Ascending aorta (tissue), 2 donors: ENCODE measurements at regions of chr20 and their contacts with region 1.

Region 1: GRCh38 chr20:33992923-33993575 is 662 bp upstream of the RALY start:
- DNase-seq: peak; percentile 96 to 100
- H3K4me3 ChIP-seq: peak overlapping the region; percentile 92 to 93
- H3K27ac ChIP-seq: peak overlapping the region; percentile 98 to 99
- H3K4me1 ChIP-seq: peaks cover 11 to 28% of the 10 kb centered on the region in 2 donors
- H3K27me3 ChIP-seq: no peaks in the 10 kb centered on the region
- CTCF ChIP-seq: no peak

Region 2: DNA sequence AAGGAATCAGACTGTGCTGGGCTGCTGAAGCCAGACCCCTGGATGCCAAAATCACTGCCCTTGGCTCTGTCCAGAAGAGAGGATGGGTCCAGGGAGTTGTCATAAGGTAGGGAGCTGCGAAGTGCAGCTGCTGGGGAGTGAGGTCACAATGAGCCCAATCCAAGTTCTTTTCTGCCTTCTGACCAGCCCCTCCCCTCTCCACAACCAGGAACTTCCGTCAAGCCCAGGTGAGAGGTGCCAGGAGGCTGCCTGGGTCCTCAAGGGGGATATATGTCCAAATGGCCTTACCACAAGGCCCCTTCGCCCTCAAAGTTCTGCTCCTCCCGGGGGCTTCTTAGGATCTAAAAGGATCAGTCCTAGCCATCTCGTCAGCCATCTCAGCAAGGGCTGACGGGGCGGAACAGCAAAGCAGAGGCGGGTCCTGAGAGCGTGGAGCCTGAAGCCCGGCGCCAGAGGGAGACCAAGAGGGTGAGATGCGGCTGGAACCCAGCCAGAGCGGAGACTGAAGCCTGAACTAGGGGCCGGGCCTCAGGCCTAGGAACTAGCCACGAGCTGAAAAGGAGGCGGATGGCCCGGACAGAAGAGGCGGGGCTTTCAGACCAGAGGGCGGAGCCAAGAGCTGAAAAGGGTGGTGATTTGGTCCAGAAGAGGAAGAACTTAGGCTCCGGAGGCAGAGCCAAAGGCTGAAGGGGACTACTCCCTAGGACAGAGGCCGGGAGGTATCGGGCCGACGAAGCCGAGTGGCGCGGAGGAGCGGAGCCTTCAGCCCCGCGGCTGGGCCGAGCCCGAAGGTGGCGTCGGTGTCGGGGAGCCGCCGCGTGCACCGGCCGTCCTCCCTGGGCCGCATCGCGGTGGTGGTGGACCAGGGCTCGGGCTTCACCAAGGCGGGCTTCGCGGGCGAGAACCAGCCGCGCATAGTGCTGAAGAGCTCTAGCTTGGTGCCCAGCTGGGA is 326.5 kb before region 1 on chr20 and contains the start of gene ACTL10:
- intact Hi-C with region 1: loop called (anchors 5 kb)
- DNase-seq: peak; percentile 95 to 99
- H3K4me3 ChIP-seq: peak within 1 kb of the TSS; percentile 65 to 70
- H3K27ac ChIP-seq: peak within 1 kb of the TSS; percentile 88 to 93
- H3K4me1 ChIP-seq: peaks cover 9 to 40% of the 10 kb centered on the region in 2 donors
- H3K27me3 ChIP-seq: no peaks in the 10 kb centered on the region
- CTCF ChIP-seq: peak in 2 of 3 experiments; percentile 43 to 44
- total RNA-seq, gene ACTL10: 26.3 TPM

Region 3: GRCh38 chr20:33810885-33811777 is 181.9 kb before region 1 on chr20 and contains the start of gene CHMP4B:
- intact Hi-C with region 1: loop called (anchors 1 kb)
- DNase-seq: peak; percentile 98 to 100
- H3K4me3 ChIP-seq: peak within 1 kb of the TSS; percentile 94 to 99
- H3K27ac ChIP-seq: peak within 1 kb of the TSS; percentile 94 to 98
- H3K4me1 ChIP-seq: peaks cover 4 to 24% of the 10 kb centered on the region in 2 donors
- H3K27me3 ChIP-seq: no peaks in the 10 kb centered on the region
- CTCF ChIP-seq: no peak
- total RNA-seq, gene CHMP4B: 42.8 TPM

Region 4: GRCh38 chr20:33862709-33863403 is 130.2 kb before region 1 on chr20:
- intact Hi-C with region 1: loop called (anchors 2 kb)
- DNase-seq: peak in 1 of 2 donors; percentile 68
- H3K4me3 ChIP-seq: peak overlapping the region in 1 of 2 donors; percentile 20
- H3K27ac ChIP-seq: no peak overlapping the region
- H3K4me1 ChIP-seq: peaks cover 4 to 5% of the 10 kb centered on the region in 2 donors
- H3K27me3 ChIP-seq: no peaks in the 10 kb centered on the region
- CTCF ChIP-seq: peak; percentile 60 to 81 (median 62)

Region 5: GRCh38 chr20:34012735-34013134 is 19.7 kb after region 1 on chr20:
- intact Hi-C with region 1: loop called (anchors 2 kb)
- DNase-seq: no peak
- H3K4me3 ChIP-seq: no peak overlapping the region
- H3K27ac ChIP-seq: no peak overlapping the region
- H3K4me1 ChIP-seq: peaks cover 9 to 64% of the 10 kb centered on the region in 2 donors
- H3K27me3 ChIP-seq: no peaks in the 10 kb centered on the region
- CTCF ChIP-seq: no peak

Region 6: DNA sequence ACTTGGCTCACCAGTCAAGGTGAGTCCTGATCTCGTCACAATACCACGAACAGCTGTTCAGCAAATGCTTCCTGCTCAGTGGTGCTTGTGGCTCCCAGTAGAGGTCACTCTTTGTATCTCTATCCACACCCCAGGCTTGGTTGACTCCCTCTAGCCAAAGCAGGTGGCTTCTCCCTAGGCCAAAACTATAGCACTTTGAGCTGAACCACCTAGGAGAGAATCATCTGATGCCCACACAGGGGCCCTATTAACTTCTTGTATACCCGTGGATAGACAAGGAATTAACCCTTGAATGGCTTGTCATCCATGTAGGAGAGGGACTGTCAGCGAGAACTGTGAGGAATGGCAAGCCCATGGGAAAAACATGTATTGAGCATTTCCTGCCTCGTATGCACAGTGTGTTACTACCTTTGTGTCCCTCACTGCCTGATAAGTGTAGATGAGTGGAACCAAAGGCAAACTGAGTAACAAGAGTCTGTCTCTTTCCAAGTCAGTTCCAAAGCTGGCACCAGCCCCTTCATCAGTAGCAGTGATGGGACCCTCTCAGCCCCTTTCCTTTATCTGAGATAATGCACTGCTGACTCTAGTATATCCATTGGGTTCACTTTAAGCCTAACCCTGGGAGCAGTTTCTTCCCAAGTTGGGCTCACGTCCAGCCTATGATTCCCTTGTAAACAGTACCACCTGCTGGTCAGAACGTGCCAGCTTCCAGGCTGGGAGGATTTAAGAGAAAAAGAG is 76.5 kb after region 1 on chr20:
- intact Hi-C with region 1: loop called (anchors 2 kb)
- DNase-seq: peak in 1 of 2 donors; percentile 84
- H3K4me3 ChIP-seq: no peak overlapping the region
- H3K27ac ChIP-seq: no peak overlapping the region
- H3K4me1 ChIP-seq: peaks cover 6 to 11% of the 10 kb centered on the region in 2 donors
- H3K27me3 ChIP-seq: no peaks in the 10 kb centered on the region
- CTCF ChIP-seq: peak; percentile 83 to 89 (median 84)

Region 7: GRCh38 chr20:34111702-34112599 is 118.9 kb after region 1 on chr20 and contains the start of gene EIF2S2:
- intact Hi-C with region 1: loop called (anchors 1 kb)
- DNase-seq: peak; percentile 87 to 97
- H3K4me3 ChIP-seq: peak within 1 kb of the TSS; percentile 79 to 95
- H3K27ac ChIP-seq: peak within 1 kb of the TSS; percentile 94 to 99
- H3K4me1 ChIP-seq: peaks cover 0 to 23% of the 10 kb centered on the region in 2 donors
- H3K27me3 ChIP-seq: no peaks in the 10 kb centered on the region
- CTCF ChIP-seq: no peak
- total RNA-seq, gene EIF2S2: 19.3 TPM